AG04450 (cell line): ENCODE measurements at regions of chr20 and their contacts with region 1.

Region 1: GRCh38 chr20:53939572-53940359 is 130.6 kb downstream of the BCAS1 start:
- DNase-seq: peak; percentile 84
- H3K4me3 ChIP-seq: no peak overlapping the region
- H3K27ac ChIP-seq: no peak overlapping the region
- H3K27me3 ChIP-seq: no peaks in the 10 kb centered on the region
- CTCF ChIP-seq: peak; percentile 80

Region 2: DNA sequence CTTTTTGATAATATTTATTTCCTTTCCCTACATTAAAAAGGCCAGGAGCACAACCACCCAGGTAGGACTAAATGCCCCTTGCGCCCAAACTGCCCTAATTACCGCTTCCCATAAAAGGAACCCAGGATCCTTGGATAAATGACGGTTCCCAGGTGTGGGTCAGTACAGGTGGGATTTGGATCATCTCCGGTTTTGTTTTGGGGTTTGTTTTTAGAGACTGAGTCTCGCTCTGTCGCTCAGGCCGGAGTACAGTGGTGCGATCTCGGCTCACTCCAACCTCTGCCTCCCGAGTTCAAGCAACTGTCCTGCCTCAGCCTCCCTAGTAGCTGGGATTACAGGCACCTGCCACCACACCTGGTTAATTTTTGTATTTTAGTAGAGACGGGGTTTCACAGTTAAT is 374.5 kb before region 1 on chr20:
- CTCF ChIA-PET with region 1: interaction called, 16 read pairs
- POLR2A ChIA-PET with region 1: interaction called, 3 read pairs
- DNase-seq: no peak
- H3K4me3 ChIP-seq: no peak overlapping the region
- H3K27ac ChIP-seq: no peak overlapping the region
- H3K27me3 ChIP-seq: no peaks in the 10 kb centered on the region
- CTCF ChIP-seq: no peak

Region 3: GRCh38 chr20:53611449-53611894 is 328.3 kb before region 1 on chr20:
- CTCF ChIA-PET with region 1: interaction called, 16 read pairs
- POLR2A ChIA-PET with region 1: no interaction called
- DNase-seq: peak; percentile 92
- H3K4me3 ChIP-seq: no peak overlapping the region
- H3K27ac ChIP-seq: peak overlapping the region; percentile 83
- H3K27me3 ChIP-seq: no peaks in the 10 kb centered on the region
- CTCF ChIP-seq: no peak

Region 4: GRCh38 chr20:53763707-53764414 is 175.9 kb before region 1 on chr20:
- CTCF ChIA-PET with region 1: interaction called, 17 read pairs
- POLR2A ChIA-PET with region 1: no interaction called
- DNase-seq: no peak
- H3K4me3 ChIP-seq: no peak overlapping the region
- H3K27ac ChIP-seq: peak overlapping the region; percentile 77
- H3K27me3 ChIP-seq: no peaks in the 10 kb centered on the region
- CTCF ChIP-seq: no peak

Region 5: DNA sequence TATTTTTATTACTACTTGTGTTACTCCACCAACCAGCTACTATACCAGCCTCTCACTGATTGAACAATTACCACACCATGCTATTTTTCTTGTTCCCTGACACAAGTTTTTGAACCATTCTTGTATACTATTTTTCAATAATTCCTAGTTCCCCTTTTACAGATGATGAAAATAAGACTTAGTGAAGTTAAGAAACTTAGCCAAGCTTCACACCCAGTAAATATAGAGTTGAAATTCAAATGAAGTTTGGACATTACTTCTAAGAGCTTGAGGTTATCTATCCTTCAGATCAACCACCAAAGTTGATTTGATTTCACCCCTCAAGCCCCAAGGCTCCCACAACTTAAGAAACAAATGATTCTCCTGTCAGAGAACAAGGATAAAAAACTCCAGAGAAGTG is 143.7 kb after region 1 on chr20:
- CTCF ChIA-PET with region 1: no interaction called
- POLR2A ChIA-PET with region 1: no interaction called
- DNase-seq: no peak
- H3K4me3 ChIP-seq: no peak overlapping the region
- H3K27ac ChIP-seq: no peak overlapping the region
- H3K27me3 ChIP-seq: peaks cover 3% of the 10 kb centered on the region
- CTCF ChIP-seq: no peak